ENCODE measurements at regions of chr22 and their contacts with region 1.

Region 1: DNA sequence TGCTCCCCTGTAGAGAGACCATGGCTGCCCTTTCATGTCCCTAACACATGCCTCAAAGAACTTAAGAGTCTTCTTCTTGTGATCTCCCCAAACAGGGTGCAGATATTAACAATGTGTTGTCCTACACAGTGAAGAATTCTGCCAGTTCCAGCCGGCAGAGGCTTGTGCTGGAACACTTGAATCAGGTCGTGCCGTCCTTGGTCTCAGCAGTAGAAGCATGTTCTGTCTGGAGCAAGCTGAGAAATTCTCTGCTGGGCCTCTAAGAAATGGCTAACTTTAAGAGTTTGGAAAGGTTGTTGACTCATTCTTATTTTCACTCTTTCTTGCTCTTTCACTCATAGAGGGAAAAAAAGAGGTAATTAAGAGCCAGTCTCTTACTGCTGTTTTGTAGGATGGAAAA is 71.1 kb upstream of the SLC25A18 start:
- DNase-seq: no peak
- ATAC-seq: peak; percentile 16 to 93 (median 72)
- H3K4me3 ChIP-seq: no peak overlapping the region
- H3K27ac ChIP-seq: peak overlapping the region; percentile 7 to 65 (median 40)
- H3K4me1 ChIP-seq: peaks cover 0 to 29% (median 14%) of the 10 kb centered on the region in 9 donors
- H3K27me3 ChIP-seq: no peaks in the 10 kb centered on the region
- CTCF ChIP-seq: no peak

Region 2: DNA sequence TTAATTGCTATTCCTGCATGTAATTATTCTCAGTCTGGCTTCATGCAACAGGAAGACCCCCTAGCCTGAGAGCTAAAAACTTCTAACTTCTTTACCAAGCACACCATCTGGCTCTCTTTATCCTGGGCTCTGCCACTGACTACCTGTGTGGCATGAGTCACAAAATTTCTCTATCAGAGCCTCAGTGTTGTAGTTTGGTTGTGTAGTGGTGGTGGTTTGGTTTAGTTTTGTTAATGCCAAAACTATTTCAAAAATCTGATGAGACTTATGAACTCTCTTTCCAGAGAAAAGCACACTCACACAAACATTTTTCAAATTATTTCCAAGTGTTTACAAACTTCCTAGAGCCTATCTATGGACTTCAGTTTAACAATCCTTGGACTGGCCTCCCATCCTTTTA is 415.0 kb before region 1 on chr22:
- intact Hi-C with region 1: loop called in 2 of 10 experiments (anchors 5 to 10 kb)
- DNase-seq: no peak
- ATAC-seq: no peak
- H3K4me3 ChIP-seq: no peak overlapping the region
- H3K27ac ChIP-seq: no peak overlapping the region
- H3K4me1 ChIP-seq: peaks cover 0 to 18% (median 0%) of the 10 kb centered on the region in 9 donors
- H3K27me3 ChIP-seq: peaks cover 0 to 3% (median 0%) of the 10 kb centered on the region in 7 donors
- CTCF ChIP-seq: no peak

Region 3: DNA sequence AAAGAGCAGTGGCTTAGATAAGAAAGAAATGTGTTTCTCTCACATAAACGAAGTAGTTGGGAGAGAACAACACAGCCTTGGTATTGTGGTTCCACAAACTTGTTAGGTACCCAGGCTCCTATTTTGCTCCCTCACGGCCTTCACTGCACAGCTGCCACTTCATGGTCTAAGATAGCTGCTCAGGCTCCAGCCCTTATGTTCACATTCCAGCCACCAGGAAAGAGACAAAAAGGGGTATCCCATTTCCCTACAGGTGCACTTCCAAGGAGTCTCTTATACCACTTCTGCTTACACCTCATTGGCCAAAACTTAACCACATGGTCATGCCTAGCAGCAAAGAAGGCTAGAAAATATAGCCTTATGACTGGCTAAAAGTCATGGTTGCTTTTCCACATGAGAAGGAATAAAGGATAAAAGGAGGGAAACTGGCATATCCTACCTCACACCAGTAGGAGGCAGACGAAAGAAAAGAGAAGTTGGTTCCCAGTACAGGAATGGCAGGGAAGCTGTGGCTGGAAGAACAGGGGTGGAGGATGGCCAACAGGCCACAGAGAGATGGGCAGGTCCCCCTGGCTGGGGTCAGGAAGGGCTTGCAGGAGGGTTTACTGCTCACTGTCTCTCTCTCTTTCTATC is 327.7 kb before region 1 on chr22:
- intact Hi-C with region 1: loop called in 1 of 10 experiments (anchors 10 kb)
- DNase-seq: no peak
- ATAC-seq: no peak
- H3K4me3 ChIP-seq: no peak overlapping the region
- H3K27ac ChIP-seq: no peak overlapping the region
- H3K4me1 ChIP-seq: peaks cover 4 to 27% (median 11%) of the 10 kb centered on the region in 9 donors
- H3K27me3 ChIP-seq: no peaks in the 10 kb centered on the region
- CTCF ChIP-seq: peak in 1 of 9 donors; percentile 15

Region 4: DNA sequence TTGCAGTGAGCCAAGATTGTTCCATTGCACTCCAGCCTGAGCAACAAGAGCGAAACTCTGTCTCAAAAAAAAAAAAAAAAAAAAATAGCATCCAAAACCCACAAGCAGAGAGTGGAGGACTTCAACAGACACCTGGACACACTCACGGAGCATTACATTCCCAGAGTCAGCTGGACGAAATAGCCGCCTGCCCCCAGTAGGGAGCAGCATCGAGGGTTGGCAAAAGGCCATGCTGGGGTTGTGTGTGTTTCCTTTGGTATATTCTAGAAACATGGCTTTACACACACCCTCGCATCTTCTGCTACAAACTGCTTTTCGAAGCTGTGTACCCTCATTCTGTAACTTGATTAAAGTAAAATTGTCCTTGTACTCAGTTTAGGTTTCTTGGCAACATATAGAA is 278.3 kb before region 1 on chr22:
- intact Hi-C with region 1: loop called in 3 of 10 experiments (anchors 5 to 10 kb)
- DNase-seq: peak; percentile 69 to 70
- ATAC-seq: peak in 6 of 8 donors; percentile 52 to 72 (median 64)
- H3K4me3 ChIP-seq: no peak overlapping the region
- H3K27ac ChIP-seq: no peak overlapping the region
- H3K4me1 ChIP-seq: peaks cover 0 to 38% (median 0%) of the 10 kb centered on the region in 9 donors
- H3K27me3 ChIP-seq: no peaks in the 10 kb centered on the region
- CTCF ChIP-seq: peak; percentile 27 to 64 (median 54)

Measured in heart right ventricle (tissue), 16 donors.